ENCODE measurements at regions of chr22 and their contacts with region 1.

Region 1: DNA sequence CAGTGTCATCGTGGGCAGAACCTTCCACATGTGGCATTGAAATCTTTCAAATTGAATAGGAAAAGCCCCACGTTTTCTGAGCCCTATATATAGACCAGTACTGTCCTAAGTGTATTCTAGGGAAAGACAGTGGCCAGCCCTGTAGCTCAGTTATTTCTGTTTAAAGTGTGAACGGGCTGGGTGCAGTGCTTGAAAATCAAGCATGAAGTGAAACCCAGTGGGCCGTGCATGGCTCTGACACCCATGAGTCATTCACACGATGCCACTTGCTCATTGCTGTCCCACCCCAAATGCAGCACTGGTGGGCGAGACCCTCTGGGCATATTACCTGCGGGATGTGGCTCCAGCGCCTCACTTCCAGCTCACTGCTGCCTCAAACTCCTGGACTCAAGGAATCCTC is 29.8 kb upstream of the CCDC188 start:
- DNase-seq: no peak
- ATAC-seq: peak; percentile 29
- H3K4me3 ChIP-seq: no peak overlapping the region
- H3K27ac ChIP-seq: no peak overlapping the region
- H3K4me1 ChIP-seq: peaks cover 0 to 60% of the 10 kb centered on the region in 2 experiments; a peak in 1 of 5 replicates
- H3K27me3 ChIP-seq: peaks cover 64 to 85% of the 10 kb centered on the region in 2 experiments; a peak in 4 of 5 replicates
- CTCF ChIP-seq: peak in 1 of 3 experiments; percentile 18; a peak in 1 of 6 replicates
- EP300 ChIP-seq: no peak
- POLR2A ChIP-seq: no peak
- RAD21 ChIP-seq: no peak

Region 2: GRCh38 chr22:20194681-20195593 is 14.3 kb after region 1 on chr22:
- CTCF ChIA-PET with region 1: no interaction called
- POLR2A ChIA-PET with region 1: interaction called, 11 read pairs
- in situ Hi-C with region 1: no loop called
- intact Hi-C with region 1: no loop called
- DNase-seq: no peak
- ATAC-seq: peak; percentile 27; the same call in 2 of the 3 replicates
- H3K4me3 ChIP-seq: no peak overlapping the region
- H3K27ac ChIP-seq: no peak overlapping the region
- H3K4me1 ChIP-seq: peaks cover 0 to 49% of the 10 kb centered on the region in 2 experiments; a peak in 2 of 5 replicates
- H3K27me3 ChIP-seq: peaks cover 84 to 95% of the 10 kb centered on the region in 2 experiments
- CTCF ChIP-seq: peak; percentile 29 to 57 (median 39); a peak in 5 of 6 replicates
- EP300 ChIP-seq: no peak
- POLR2A ChIP-seq: no peak
- RAD21 ChIP-seq: peak in 1 of 2 experiments; percentile 29; a peak in 1 of 4 replicates